ENCODE measurements at regions of chr16 and their contacts with region 1.

Region 1: GRCh38 chr16:695355-696089 is 5.3 kb upstream of the WDR24 start:
- DNase-seq: peak; percentile 89
- ATAC-seq: peak; percentile 82
- H3K4me3 Mint-ChIP-seq: peak overlapping the region; percentile 77
- H3K27ac Mint-ChIP-seq: peak overlapping the region; percentile 80
- H3K4me1 Mint-ChIP-seq: peaks cover 13% of the 10 kb centered on the region
- H3K27me3 Mint-ChIP-seq: no peaks in the 10 kb centered on the region

Region 2: DNA sequence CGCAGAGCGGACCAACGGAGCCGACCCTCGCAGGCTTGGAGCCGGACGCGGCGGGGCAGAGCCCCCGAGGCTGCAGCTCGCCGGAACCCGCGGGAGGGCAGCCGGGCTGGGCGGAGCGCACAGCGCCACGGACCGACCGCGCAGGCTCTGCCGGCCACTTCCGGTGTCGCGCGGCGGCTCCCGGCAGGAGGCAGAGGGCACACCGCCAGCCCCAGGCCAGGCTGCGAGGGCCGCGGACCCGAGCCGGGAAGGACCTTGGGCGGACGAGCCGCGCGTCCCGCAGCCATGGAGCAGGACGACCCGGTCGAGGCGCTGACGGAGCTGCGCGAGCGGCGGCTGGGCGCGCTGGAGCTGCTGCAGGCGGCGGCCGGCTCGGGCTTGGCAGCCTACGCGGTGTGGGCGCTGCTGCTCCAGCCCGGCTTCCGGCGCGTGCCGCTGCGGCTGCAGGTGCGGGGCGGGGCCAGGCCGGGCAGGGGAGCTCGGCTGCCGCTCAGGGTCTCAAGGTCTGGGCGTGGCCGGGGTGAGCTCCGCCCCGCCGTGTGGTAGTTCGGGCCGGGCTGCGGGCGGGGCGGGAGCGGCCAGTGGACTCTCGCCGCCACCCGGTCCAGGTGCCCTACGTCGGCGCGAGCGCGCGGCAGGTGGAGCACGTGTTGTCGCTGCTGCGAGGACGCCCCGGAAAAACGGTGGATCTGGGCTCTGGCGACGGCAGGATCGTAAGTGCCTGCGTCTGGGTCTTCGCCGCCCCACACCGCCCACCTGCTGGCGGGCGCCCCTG is 25.7 kb after region 1 on chr16 and contains the start of gene ANTKMT:
- CTCF ChIA-PET with region 1: interaction called, 3 read pairs
- POLR2A ChIA-PET with region 1: no interaction called
- intact Hi-C with region 1: loop called in 1 of 2 experiments (anchors 2 kb)
- DNase-seq: peak; percentile 86
- ATAC-seq: peak; percentile 72
- H3K4me3 Mint-ChIP-seq: peak within 1 kb of the TSS; percentile 76
- H3K27ac Mint-ChIP-seq: peak within 1 kb of the TSS; percentile 78
- H3K4me1 Mint-ChIP-seq: peaks cover 16% of the 10 kb centered on the region
- H3K27me3 Mint-ChIP-seq: peaks cover 3% of the 10 kb centered on the region
- total RNA-seq, gene ANTKMT: 13.3 to 27.0 TPM

Region 3: DNA sequence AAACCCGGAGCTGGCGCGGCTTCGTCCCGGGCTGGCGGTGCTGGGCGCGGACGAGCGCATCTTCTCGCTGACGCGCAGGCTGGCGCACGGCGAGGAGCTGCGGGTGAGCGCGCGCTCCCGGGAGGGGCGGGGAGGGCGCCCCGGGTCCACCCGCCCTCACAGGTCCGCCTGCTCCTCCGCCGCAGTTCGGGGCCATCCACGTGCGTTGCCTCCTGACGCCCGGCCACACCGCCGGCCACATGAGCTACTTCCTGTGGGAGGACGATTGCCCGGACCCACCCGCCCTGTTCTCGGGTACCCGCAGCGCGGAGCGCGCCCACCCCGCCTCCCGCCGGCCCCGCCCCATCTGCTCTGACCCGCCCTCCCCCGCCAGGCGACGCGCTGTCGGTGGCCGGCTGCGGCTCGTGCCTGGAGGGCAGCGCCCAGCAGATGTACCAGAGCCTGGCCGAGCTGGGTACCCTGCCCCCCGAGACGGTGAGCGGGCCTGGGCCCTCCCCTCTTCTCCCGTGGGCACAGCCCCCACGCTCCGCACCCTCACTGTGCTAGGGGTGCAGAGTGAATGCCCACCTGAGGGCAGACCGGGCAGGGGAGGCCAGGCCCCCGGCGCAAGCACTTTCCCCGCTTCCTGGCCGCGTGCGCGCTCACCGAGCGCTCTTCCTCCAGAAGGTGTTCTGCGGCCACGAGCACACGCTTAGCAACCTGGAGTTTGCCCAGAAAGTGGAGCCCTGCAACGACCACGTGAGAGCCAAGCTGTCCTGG is 32.8 kb after region 1 on chr16:
- CTCF ChIA-PET with region 1: no interaction called
- POLR2A ChIA-PET with region 1: no interaction called
- intact Hi-C with region 1: loop called in 1 of 2 experiments (anchors 1 kb)
- DNase-seq: peak; percentile 74
- ATAC-seq: peak; percentile 70
- H3K4me3 Mint-ChIP-seq: peak overlapping the region; percentile 44
- H3K27ac Mint-ChIP-seq: no peak overlapping the region
- H3K4me1 Mint-ChIP-seq: peaks cover 3% of the 10 kb centered on the region
- H3K27me3 Mint-ChIP-seq: no peaks in the 10 kb centered on the region

Region 4: DNA sequence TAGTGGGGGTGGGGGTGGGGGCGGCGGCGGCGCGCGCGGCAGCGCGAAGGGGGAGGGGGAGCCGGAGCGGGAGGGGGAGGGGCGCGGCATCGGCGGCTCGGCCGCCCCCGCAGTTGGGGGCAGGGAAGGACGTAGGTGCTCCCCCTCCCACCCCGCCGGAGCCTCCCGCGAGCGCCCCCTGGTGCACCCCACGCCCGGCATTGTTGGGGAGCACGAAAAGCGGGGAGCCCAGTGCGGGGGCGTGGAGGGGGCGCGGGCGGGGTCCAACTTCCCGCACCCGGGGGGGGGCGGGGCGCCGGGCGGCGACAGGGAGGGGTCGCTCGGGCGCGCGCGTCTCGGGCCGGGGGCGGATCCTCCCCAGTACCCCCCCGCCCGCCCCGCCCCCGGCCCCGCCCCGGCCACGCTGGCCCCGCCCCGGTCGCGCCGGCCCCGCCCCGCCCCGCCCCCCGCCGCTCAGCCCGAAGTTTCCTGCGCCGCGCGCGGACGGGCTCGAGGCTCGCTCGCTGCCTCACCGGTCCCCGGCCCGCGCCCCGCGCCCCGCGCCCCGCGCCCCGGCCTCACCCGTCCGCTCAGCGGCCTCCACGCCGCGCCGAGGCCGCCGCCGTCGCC is 457.2 kb after region 1 on chr16 and contains the start of gene CACNA1H:
- CTCF ChIA-PET with region 1: no interaction called
- POLR2A ChIA-PET with region 1: no interaction called
- intact Hi-C with region 1: loop called in 1 of 2 experiments (anchors 5 kb)
- DNase-seq: peak; percentile 82
- ATAC-seq: peak; percentile 68
- H3K4me3 Mint-ChIP-seq: peak within 1 kb of the TSS; percentile 41
- H3K27ac Mint-ChIP-seq: no peak within 1 kb of the TSS
- H3K4me1 Mint-ChIP-seq: peaks cover 2% of the 10 kb centered on the region
- H3K27me3 Mint-ChIP-seq: peaks cover 7% of the 10 kb centered on the region
- total RNA-seq, gene CACNA1H: 0.86 to 0.98 TPM

Measured in activated CD4-positive, alpha-beta T cell treated with anti-CD3 and anti-CD28 coated beads for 36 hours (primary cell).